Colonic mucosa (tissue), 4 donors: ENCODE measurements at regions of chr16 and their contacts with region 1.

Region 1: GRCh38 chr16:3879887-3880564 is 487 bp downstream of the CREBBP start:
- DNase-seq: peak; percentile 68
- H3K4me3 ChIP-seq: peak overlapping the region; percentile 84
- H3K27ac ChIP-seq: no peak overlapping the region
- H3K4me1 ChIP-seq: no peaks in the 10 kb centered on the region
- H3K27me3 ChIP-seq: no peaks in the 10 kb centered on the region
- CTCF ChIP-seq: no peak

Region 2: GRCh38 chr16:3690470-3690928 is 189.5 kb before region 1 on chr16:
- intact Hi-C with region 1: loop called (anchors 5 kb)
- DNase-seq: peak; percentile 88
- H3K4me3 ChIP-seq: no peak overlapping the region
- H3K27ac ChIP-seq: no peak overlapping the region
- H3K4me1 ChIP-seq: peaks cover 4% of the 10 kb centered on the region
- H3K27me3 ChIP-seq: no peaks in the 10 kb centered on the region
- CTCF ChIP-seq: peak; percentile 94

Region 3: GRCh38 chr16:3774156-3774767 is 105.8 kb before region 1 on chr16:
- intact Hi-C with region 1: loop called (anchors 10 kb)
- DNase-seq: no peak
- H3K4me3 ChIP-seq: no peak overlapping the region
- H3K27ac ChIP-seq: no peak overlapping the region
- H3K4me1 ChIP-seq: no peaks in the 10 kb centered on the region
- H3K27me3 ChIP-seq: no peaks in the 10 kb centered on the region
- CTCF ChIP-seq: no peak